CD4-positive, alpha-beta memory T cell (primary cell): ENCODE measurements at regions of chr1 and their contacts with region 1.

Region 1: DNA sequence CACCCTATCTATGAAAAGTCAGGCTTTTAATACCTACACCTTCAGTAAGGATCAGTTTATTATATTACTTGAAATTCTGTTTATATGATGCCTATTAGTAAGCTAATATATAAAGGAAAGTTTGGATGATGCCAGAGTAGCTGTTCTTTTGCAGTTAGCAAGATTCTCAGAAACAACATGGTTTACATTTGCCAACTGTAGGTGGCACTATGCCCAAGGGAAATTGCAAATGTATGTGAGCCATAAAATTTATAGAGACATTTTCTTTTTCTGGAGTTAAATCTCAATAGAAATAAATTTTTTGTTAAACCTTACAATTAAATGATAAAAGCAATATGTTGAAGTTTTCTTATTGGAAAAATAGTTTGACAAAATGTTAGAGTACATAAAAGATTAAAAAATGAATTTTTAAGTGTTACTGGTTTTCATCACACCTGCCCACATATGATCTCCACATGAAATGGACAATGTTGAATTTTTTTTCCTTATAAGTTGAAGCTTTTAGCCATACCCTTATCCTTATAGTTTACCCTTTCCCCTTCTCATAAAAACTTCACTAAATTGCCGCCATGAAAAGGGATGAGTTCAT is 32.1 kb upstream of the EPHX4 start:
- DNase-seq: peak; percentile 40 to 53 (median 46)
- H3K4me3 ChIP-seq: no peak overlapping the region
- H3K4me3 Mint-ChIP-seq: no peak overlapping the region
- H3K27ac ChIP-seq: no peak overlapping the region
- H3K27ac Mint-ChIP-seq: no peak overlapping the region
- H3K4me1 ChIP-seq: no peaks in the 10 kb centered on the region
- H3K4me1 Mint-ChIP-seq: no peaks in the 10 kb centered on the region
- H3K27me3 ChIP-seq: no peaks in the 10 kb centered on the region
- H3K27me3 Mint-ChIP-seq: no peaks in the 10 kb centered on the region

Region 2: GRCh38 chr1:91981996-91982609 is 15.6 kb before region 1 on chr1:
- CTCF ChIA-PET with region 1: interaction called, 11 read pairs
- POLR2A ChIA-PET with region 1: no interaction called
- intact Hi-C with region 1: no loop called
- DNase-seq: no peak
- H3K4me3 ChIP-seq: no peak overlapping the region
- H3K4me3 Mint-ChIP-seq: no peak overlapping the region
- H3K27ac ChIP-seq: no peak overlapping the region
- H3K27ac Mint-ChIP-seq: no peak overlapping the region
- H3K4me1 ChIP-seq: no peaks in the 10 kb centered on the region
- H3K4me1 Mint-ChIP-seq: no peaks in the 10 kb centered on the region
- H3K27me3 ChIP-seq: no peaks in the 10 kb centered on the region
- H3K27me3 Mint-ChIP-seq: no peaks in the 10 kb centered on the region

Region 3: GRCh38 chr1:92051948-92052347 is 54.2 kb after region 1 on chr1:
- CTCF ChIA-PET with region 1: no interaction called
- POLR2A ChIA-PET with region 1: no interaction called
- intact Hi-C with region 1: no loop called
- DNase-seq: no peak
- H3K4me3 ChIP-seq: no peak overlapping the region
- H3K4me3 Mint-ChIP-seq: no peak overlapping the region
- H3K27ac ChIP-seq: no peak overlapping the region
- H3K27ac Mint-ChIP-seq: no peak overlapping the region
- H3K4me1 ChIP-seq: no peaks in the 10 kb centered on the region
- H3K4me1 Mint-ChIP-seq: no peaks in the 10 kb centered on the region
- H3K27me3 ChIP-seq: no peaks in the 10 kb centered on the region
- H3K27me3 Mint-ChIP-seq: peaks cover 0 to 4% of the 10 kb centered on the region in 2 donors

Region 4: DNA sequence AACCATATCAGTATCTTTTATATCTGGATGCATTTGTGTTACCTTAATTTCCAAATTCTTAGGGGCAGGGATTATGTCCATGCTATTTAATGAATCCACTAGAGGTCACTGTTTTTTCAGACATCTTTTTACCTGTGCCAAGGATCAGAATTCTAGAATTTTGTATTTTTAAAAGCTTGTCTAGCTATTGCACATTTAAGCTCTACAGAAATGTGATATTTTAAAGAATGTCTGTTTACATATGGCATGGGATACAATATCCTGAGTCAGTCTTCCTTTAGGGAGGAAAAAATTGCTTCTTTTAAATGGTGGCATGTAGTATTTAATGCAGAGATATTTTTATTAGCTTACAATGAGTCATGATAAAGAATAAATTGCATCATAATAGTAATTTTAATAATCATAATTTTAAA is 312.5 kb after region 1 on chr1:
- CTCF ChIA-PET with region 1: interaction called, 11 read pairs
- POLR2A ChIA-PET with region 1: no interaction called
- intact Hi-C with region 1: no loop called
- DNase-seq: peak in 4 of 5 donors; percentile 34 to 44 (median 40)
- H3K4me3 ChIP-seq: no peak overlapping the region
- H3K4me3 Mint-ChIP-seq: peak overlapping the region in 1 of 8 donors; percentile 36
- H3K27ac ChIP-seq: no peak overlapping the region
- H3K27ac Mint-ChIP-seq: peak overlapping the region in 2 of 7 donors; percentile 47 to 72
- H3K4me1 ChIP-seq: peaks cover 32% of the 10 kb centered on the region
- H3K4me1 Mint-ChIP-seq: peaks cover 21 to 37% (median 31%) of the 10 kb centered on the region in 4 donors
- H3K27me3 ChIP-seq: no peaks in the 10 kb centered on the region
- H3K27me3 Mint-ChIP-seq: no peaks in the 10 kb centered on the region

Region 5: DNA sequence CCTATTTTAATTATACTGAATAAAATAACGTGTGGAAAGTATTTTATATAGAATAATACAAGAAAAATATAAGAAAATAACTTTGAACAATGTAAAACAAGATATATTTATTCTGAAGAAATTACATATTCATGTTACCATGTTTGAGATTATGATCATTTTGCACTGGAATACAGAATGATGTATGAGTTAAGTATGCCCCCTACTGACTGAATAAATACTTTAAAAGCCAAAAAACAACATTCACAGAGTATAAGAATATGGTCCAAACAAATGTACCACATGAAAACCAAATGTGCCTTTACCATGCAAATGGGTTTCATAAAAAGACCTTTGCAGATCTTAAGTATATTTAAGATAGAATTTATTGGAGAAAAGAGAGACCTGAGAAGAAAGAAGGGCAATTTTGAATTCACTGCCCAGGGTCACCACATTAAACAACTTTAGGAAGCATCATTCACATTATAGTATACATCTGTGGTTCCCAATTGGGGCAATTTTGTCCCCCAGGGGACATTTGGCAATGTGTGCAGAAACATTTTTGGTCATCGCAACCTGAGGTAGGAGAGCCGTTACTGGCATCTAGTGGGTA is 625.6 kb after region 1 on chr1:
- CTCF ChIA-PET with region 1: interaction called, 32 read pairs
- POLR2A ChIA-PET with region 1: interaction called, 3 read pairs
- intact Hi-C with region 1: loop called (anchors 1 kb)
- DNase-seq: peak in 4 of 5 donors; percentile 29 to 42 (median 36)
- H3K4me3 ChIP-seq: no peak overlapping the region
- H3K4me3 Mint-ChIP-seq: no peak overlapping the region
- H3K27ac ChIP-seq: no peak overlapping the region
- H3K27ac Mint-ChIP-seq: no peak overlapping the region
- H3K4me1 ChIP-seq: no peaks in the 10 kb centered on the region
- H3K4me1 Mint-ChIP-seq: no peaks in the 10 kb centered on the region
- H3K27me3 ChIP-seq: no peaks in the 10 kb centered on the region
- H3K27me3 Mint-ChIP-seq: no peaks in the 10 kb centered on the region